ENCODE measurements at regions of chr4 and their contacts with region 1.

Region 1: DNA sequence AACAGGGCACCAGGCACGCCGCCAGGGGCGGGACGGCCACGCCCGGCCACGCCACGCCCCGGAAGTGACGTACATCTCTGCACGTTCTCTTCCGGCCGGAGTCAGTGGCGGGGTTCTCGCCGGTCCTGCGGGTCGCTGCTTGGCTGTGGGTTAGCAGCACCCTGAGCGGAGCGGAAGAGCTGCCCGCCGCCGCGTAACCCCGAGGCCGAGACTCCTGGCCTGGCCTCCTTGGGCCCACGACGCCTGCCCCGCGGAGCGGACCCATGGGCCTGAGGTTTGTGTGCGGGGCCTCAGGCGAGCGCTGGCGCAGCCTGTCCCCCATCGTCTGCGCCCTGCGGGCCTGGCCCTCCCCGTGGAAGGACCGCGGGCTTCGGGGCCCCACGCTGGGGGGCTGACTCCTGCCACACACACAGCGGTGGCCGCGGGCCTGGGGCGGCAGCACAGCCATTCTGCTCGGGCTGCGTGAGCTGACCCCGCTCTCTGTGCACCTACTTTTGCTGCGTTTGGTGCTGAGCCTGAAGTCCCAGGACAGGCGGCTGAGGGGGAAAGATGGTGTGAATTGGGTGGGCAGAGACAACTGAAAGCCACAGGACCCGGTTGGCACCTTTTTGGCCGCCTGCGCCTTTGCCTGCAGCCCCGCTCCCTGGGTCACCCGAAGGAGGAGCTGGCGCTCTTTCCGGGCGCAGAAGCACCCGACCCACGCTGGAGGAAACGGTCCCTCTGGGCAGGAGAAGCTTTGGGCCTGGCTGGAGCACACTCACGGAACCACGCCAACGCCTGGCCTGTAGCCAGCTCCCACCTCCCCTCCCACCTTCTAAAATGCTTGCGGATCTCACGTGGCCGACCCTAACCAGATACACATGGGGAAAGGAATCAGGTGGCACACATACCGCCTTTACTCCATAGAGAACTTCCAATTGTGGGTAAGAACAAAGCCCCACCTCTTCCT is 28.1 kb downstream of the NOP14 start:
- DNase-seq: peak; percentile 54
- H3K4me3 ChIP-seq: peak overlapping the region; percentile 91
- CTCF ChIP-seq: no peak

Region 2: DNA sequence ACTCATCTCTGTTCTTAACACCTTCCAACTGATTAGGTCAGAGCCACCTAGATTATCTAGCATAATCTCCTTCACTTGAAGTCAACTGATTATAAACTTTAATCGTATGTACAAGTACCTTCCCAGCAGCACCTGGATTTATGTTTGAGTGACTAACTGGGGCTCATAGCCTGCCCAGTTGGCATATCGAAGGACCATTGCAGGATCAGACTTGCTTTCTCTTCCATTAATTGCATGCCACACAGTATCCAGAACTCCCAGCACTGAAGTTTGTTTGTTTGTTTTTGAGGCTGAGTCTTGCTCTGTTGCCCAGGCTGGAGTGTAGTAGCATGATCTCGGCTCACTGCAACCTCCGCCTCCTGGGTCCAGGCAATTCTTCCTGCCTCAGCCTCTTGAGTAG is 56.2 kb after region 1 on chr4:
- in situ Hi-C with region 1: loop called (anchors 5 kb)
- DNase-seq: no peak
- H3K4me3 ChIP-seq: no peak overlapping the region
- CTCF ChIP-seq: no peak

Measured in astrocyte of the cerebellum (primary cell).